ENCODE measurements at regions of chr5 and their contacts with region 1.

Region 1: DNA sequence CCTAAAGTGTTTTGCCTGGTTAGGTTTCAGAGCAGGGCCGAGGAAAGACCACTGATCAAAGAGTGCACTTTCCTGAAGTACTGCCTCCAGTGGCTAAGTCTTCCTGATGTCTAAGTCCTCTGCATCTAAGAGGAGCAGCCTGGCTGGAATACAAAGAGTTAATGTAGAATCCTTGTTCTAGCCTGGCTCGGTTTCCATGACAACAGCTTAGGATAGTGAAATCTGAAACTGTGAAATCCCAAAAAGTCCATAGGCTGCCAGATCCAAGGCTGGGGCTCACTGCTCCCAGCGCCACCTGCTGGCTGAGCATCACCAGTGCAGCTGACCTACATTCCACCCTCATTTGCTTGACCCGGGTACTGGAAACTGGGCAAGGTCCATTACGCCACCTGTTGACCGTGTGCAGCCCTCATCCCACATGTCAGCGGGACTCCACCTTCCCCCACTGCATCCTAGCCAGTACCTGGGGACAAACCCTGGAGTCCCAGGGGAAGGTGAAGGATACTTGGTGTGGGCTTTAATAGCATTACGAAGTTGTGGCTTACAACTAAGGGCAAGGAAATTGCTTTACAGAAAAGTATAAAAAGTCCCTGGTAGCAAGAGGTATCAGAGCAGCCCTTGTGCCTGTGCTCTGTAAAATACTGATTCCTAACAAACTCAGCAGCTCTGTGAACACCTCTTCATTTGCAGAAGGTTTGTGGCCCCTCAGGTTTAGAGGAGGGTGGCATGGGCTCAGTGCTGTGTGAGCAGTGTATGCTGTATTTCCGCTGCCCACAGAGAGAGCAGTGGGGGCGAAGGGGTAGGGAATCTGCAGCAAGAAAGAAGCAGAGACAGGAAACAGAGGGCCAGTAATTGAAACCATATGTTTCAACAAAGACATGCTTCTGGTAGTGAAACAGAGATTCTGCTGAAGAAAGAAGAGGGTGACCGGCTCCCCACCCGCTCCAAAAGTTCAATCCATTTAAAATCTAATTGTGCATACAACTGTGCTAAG is 36.0 kb downstream of the PCDHGC5 start:
- DNase-seq: peak; percentile 77 to 78
- H3K4me3 ChIP-seq: no peak overlapping the region
- H3K27ac ChIP-seq: no peak overlapping the region
- H3K4me1 ChIP-seq: peaks cover 38% of the 10 kb centered on the region
- H3K27me3 ChIP-seq: no peaks in the 10 kb centered on the region
- CTCF ChIP-seq: peak; percentile 97

Region 2: GRCh38 chr5:141320225-141321169 is 204.4 kb before region 1 on chr5 and contains the start of gene TAF7:
- CTCF ChIA-PET with region 1: no interaction called
- POLR2A ChIA-PET with region 1: no interaction called
- intact Hi-C with region 1: loop called (anchors 10 kb)
- DNase-seq: peak; percentile 75 to 90
- H3K4me3 ChIP-seq: peak within 1 kb of the TSS; percentile 89
- H3K27ac ChIP-seq: peak within 1 kb of the TSS; percentile 91
- H3K4me1 ChIP-seq: 0 out of 2 replicates have a peak, but pooled peaks cover 5% of the 10 kb centered on the region
- H3K27me3 ChIP-seq: 0 out of 2 replicates have a peak, but pooled peaks cover 6% of the 10 kb centered on the region
- CTCF ChIP-seq: peak; percentile 88
- total RNA-seq, gene TAF7: 56.1 and 57.6 TPM in 2 replicates

Region 3: DNA sequence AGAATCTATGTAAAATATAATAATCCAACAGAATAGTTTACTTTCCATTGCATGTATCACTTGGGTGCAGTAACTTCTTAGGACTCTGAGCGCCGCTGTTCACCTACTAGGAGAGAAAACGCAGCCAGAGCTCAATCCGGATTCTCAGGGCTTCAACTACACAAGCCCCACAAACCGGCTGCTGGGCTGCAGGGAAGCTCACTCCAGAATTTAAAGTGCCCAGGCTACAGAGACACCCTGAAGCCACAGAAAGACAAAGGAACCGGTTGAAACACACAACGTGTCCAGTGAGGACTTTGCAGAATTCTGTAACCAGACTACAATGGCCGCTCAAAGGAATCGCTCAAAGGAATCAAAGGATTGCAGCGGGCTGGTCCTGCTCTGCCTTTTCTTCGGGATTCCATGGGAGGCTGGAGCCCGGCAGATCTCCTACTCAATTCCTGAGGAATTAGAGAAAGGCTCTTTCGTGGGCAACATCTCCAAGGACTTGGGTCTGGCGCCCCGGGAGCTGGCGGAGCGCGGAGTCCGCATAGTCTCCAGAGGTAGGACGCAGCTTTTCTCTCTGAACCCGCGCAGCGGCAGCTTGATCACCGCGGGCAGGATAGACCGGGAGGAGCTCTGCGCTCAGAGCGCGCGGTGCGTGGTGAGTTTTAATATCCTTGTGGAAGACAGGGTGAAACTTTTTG is 111.9 kb before region 1 on chr5 and contains the start of gene PCDHGA10:
- CTCF ChIA-PET with region 1: interaction called, 3 read pairs
- POLR2A ChIA-PET with region 1: interaction called, 3 read pairs
- intact Hi-C with region 1: loop called (anchors 2 kb)
- DNase-seq: peak; percentile 58
- H3K4me3 ChIP-seq: peak within 1 kb of the TSS; percentile 54; the same call in 1 of the 2 replicates
- H3K27ac ChIP-seq: no peak within 1 kb of the TSS
- H3K4me1 ChIP-seq: no peaks in the 10 kb centered on the region
- H3K27me3 ChIP-seq: 0 out of 2 replicates have a peak, but pooled peaks cover 11% of the 10 kb centered on the region
- CTCF ChIP-seq: peak; percentile 86
- total RNA-seq, gene PCDHGA10: 0.13 and 0.15 TPM in 2 replicates

Region 4: GRCh38 chr5:141420855-141421496 is 103.9 kb before region 1 on chr5 and contains the start of gene PCDHGA11:
- CTCF ChIA-PET with region 1: interaction called, 8 read pairs
- POLR2A ChIA-PET with region 1: no interaction called
- intact Hi-C with region 1: loop called (anchors 1 kb)
- DNase-seq: peak; percentile 38 to 60
- H3K4me3 ChIP-seq: peak within 1 kb of the TSS; percentile 50
- H3K27ac ChIP-seq: no peak within 1 kb of the TSS
- H3K4me1 ChIP-seq: no peaks in the 10 kb centered on the region
- H3K27me3 ChIP-seq: peaks cover 25% of the 10 kb centered on the region; the same call in 1 of the 2 replicates
- CTCF ChIP-seq: peak; percentile 81
- total RNA-seq, gene PCDHGA11: 0.18 and 0.22 TPM in 2 replicates

Region 5: DNA sequence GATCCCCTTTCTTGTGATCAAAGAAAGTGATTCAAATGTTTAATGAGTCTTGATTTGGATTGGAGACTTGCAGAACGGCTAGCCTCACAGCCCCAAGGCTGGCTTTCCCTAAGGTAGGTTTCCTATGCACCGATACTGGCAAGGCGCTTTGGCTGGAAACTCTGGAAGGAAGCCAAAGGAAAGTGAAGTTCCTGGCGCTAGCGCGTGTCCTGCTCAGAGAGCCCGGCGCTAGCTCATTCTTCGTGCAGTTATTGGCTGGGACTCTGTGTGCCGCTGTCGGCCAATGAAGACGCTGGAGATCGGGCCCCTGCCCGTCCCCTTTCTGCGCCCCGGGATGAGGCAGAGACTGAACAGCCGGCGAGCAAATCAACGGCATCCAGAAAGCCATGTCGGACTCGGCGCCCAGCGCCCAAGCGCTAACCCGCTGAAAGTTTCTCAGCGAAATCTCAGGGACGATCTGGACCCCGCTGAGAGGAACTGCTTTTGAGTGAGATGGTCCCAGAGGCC is 49.2 kb before region 1 on chr5 and contains the start of gene PCDHGC3:
- CTCF ChIA-PET with region 1: interaction called, 5 read pairs
- POLR2A ChIA-PET with region 1: interaction called, 3 read pairs
- intact Hi-C with region 1: loop called (anchors 5 kb)
- DNase-seq: peak; percentile 71
- H3K4me3 ChIP-seq: peak within 1 kb of the TSS; percentile 58
- H3K27ac ChIP-seq: no peak within 1 kb of the TSS
- H3K4me1 ChIP-seq: no peaks in the 10 kb centered on the region
- H3K27me3 ChIP-seq: peaks cover 10% of the 10 kb centered on the region
- CTCF ChIP-seq: peak; percentile 33; the same call in 1 of the 2 replicates
- total RNA-seq, gene PCDHGC3: 0.50 and 0.53 TPM in 2 replicates

Measured in PC-9 (cell line).